ENCODE measurements at regions of chr20 and their contacts with region 1.

Region 1: DNA sequence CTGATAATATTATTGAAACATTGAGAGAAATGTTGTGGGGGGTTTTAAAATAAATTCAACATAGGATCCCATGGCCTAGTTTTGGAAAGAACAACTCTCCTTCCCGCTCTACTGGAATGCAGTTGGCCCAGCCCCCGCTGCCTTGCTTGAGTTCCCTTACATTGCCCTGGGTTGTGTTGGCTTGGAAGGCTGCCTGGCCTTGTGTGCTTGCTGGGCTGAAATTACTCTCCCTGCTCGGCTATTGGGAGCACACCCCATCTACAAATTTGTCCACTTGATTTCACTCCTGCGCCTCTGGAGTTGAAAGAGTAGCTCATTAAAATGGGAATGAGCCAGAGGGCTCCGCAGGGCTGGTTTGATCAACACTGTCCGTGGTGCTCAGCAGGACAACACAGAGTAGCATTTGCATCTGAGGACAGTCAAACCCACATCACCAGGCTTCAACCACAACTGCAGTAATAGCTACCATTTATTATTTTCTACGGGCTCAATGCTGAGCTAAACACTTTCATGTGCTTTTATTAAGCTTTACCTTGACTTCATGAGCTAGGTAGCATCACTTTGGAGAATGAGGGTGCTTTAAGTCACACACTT is 35.2 kb downstream of the DOK5 start:
- ATAC-seq: peak in 1 of 8 experiments; percentile 12
- H3K4me3 ChIP-seq: no peak overlapping the region
- H3K27ac ChIP-seq: no peak overlapping the region
- H3K4me1 ChIP-seq: no peaks in the 10 kb centered on the region

Region 2: GRCh38 chr20:54624706-54625390 is 114.2 kb after region 1 on chr20:
- in situ Hi-C with region 1: loop called in 1 of 9 experiments (anchors 25 kb)
- ATAC-seq: peak in 7 of 8 experiments; percentile 25 to 92 (median 85)
- H3K4me3 ChIP-seq: no peak overlapping the region
- H3K27ac ChIP-seq: peak overlapping the region in 1 of 2 donors; percentile 27
- H3K4me1 ChIP-seq: peaks cover 18 to 22% of the 10 kb centered on the region in 2 donors

Region 3: DNA sequence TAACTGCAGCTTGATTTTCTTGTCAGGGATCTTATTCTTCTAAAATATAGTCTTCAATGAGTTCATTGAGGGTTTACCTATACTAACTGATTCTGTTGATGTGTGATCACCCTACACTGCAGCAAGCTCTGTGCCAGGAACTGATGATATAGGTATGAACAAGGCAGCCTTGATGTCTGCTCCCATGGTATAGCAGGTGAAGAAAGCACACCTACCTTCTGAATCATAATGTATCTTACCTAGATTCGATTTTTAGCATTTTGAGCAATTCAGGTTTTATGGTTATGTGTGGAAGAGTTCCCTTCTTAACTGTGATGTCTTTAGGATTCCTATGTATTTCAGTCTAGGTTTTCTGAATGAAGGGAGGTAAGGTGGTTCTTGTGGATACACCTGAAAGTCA is 187.7 kb after region 1 on chr20:
- in situ Hi-C with region 1: no loop called
- ATAC-seq: no peak
- H3K4me3 ChIP-seq: no peak overlapping the region
- H3K27ac ChIP-seq: no peak overlapping the region
- H3K4me1 ChIP-seq: no peaks in the 10 kb centered on the region